ENCODE measurements at regions of chr17 and their contacts with region 1.

Region 1: DNA sequence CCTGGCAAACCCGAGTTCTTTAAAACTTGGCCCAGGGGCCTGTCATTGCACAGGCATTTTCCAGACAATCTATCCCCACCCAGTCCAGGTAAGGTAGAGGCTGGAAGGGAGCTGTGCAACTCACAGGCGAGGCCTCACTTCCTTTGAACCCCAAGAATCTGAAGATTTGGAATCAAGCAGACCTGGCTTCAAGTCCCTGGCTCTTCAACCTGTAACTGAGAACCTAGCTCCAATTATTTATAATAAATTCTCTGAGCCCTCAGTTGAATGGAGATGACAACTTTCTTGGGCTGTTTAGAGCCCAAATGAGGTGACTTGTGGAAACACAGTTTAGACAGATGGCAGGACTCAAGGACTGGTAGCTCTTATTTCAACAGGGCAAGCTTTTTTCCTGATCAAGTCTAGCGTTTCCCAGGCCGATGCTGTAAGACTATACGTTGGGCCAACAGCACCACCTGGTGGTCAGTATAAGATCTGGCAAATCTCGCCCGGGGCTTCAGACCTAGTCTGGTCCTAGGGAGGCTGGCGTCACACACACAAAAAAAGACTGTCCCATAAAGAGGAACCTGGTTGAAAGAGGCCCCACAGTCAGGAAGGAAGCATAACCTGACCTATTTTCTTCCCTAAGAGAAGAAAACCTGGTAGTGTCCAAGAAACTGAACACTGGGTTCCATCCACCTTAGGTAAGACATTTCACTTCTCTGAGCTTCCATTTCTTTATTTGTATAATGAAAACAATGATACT is 117.9 kb downstream of the C17orf67 start:
- DNase-seq: peak; percentile 91
- H3K4me3 Mint-ChIP-seq: no peak overlapping the region
- H3K27ac Mint-ChIP-seq: no peak overlapping the region
- H3K4me1 Mint-ChIP-seq: peaks cover 9% of the 10 kb centered on the region
- H3K27me3 Mint-ChIP-seq: no peaks in the 10 kb centered on the region

Region 2: GRCh38 chr17:56499799-56500388 is 215.9 kb before region 1 on chr17:
- CTCF ChIA-PET with region 1: interaction called, 46 read pairs
- intact Hi-C with region 1: loop called (anchors 1 kb)
- DNase-seq: peak; percentile 64
- H3K4me3 Mint-ChIP-seq: no peak overlapping the region
- H3K27ac Mint-ChIP-seq: no peak overlapping the region
- H3K4me1 Mint-ChIP-seq: no peaks in the 10 kb centered on the region
- H3K27me3 Mint-ChIP-seq: no peaks in the 10 kb centered on the region

Region 3: GRCh38 chr17:56598466-56599148 is 117.2 kb before region 1 on chr17:
- CTCF ChIA-PET with region 1: interaction called, 66 read pairs
- intact Hi-C with region 1: no loop called
- DNase-seq: peak; percentile 13
- H3K4me3 Mint-ChIP-seq: peak overlapping the region; percentile 52
- H3K27ac Mint-ChIP-seq: peak overlapping the region; percentile 85
- H3K4me1 Mint-ChIP-seq: peaks cover 66% of the 10 kb centered on the region
- H3K27me3 Mint-ChIP-seq: no peaks in the 10 kb centered on the region

Region 4: DNA sequence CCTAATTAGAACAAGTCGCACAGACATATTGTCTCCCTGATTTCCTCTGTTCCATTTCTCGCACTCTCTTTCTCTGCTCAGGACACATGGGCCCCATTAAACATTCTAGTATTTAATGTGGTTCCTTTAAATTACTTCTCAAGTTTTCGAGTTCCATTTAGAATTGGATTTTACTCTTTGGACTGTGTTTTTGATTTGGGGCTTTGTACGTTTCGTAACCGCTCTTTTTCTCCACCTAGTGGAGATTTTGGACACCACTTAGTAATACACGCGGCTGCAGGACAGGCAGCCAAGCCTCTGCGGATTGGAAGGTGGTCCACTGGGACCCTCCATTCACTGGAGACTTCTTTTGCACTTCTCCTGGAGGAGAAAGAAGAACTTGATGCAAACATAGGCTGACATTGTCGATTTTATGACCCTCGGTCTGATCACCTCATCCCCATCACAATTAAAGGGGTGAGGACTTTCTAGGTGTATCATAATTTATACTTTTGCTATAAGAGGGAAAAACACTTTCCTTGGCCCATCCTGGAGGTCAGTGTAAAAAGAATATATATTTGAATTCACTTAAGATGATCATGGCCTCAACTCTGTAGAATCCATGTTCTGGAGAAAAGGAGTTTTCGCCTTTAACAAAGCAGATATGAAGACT is 36.5 kb before region 1 on chr17:
- CTCF ChIA-PET with region 1: interaction called, 21 read pairs
- intact Hi-C with region 1: loop called (anchors 1 kb)
- DNase-seq: no peak
- H3K4me3 Mint-ChIP-seq: peak overlapping the region; percentile 69
- H3K27ac Mint-ChIP-seq: no peak overlapping the region
- H3K4me1 Mint-ChIP-seq: peaks cover 19% of the 10 kb centered on the region
- H3K27me3 Mint-ChIP-seq: peaks cover 33% of the 10 kb centered on the region

Region 5: DNA sequence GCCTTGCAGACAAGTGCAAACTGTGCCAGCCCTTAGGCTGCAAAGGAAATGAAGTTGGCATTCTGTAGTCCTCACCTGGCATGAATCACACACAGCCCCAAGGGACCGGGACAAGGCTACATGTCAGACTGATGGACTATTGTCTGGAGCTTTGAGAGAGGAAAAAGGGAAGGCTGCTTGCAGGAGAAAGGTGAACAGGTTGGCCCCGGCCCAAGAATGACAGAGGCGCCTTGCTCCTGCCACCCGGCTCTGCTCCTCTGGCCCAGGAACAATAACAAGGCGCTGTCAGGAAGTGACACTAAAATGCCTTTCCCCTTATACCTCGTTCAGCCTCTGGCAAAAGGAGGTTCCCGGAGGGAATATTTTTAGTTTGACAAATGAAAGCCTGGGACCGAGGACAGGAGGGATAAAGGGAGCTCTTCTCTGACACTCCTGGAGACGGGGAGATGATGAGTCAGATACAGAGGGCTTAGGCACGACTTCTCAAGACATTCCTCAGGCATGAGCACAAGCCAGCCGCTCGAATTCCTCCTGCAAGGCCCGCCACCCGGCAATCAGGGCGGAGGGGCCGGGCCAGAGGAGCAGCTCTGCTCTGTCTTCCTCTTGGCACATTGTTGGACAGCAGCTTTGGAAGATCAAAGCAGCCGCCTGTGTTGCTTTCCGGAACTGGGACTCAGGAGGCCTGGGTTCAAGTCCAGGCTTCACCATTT is 16.4 kb before region 1 on chr17:
- CTCF ChIA-PET with region 1: interaction called, 18 read pairs
- intact Hi-C with region 1: no loop called
- DNase-seq: no peak
- H3K4me3 Mint-ChIP-seq: no peak overlapping the region
- H3K27ac Mint-ChIP-seq: no peak overlapping the region
- H3K4me1 Mint-ChIP-seq: no peaks in the 10 kb centered on the region
- H3K27me3 Mint-ChIP-seq: no peaks in the 10 kb centered on the region

Region 6: DNA sequence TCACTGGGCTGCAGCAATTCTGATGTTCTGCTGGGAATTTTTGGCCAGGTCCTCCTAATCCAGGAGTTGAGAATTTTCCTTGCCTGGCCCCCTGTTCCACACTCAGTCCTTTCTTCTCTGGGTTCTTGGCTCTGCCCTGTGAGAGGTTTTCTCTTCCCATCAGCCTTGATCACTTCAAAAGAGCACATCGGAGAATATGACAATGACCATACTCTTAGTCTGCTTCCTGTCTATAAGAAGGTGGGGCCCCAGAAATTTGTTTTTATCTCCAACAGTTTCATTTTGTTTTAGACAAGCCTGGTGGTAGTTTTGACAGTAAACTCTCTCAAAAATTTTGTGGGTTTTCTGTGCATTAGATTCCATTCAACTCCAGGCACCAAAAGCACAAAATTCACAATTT is 47.2 kb after region 1 on chr17:
- CTCF ChIA-PET with region 1: interaction called, 10 read pairs
- intact Hi-C with region 1: loop called (anchors 5 kb)
- DNase-seq: peak; percentile 37
- H3K4me3 Mint-ChIP-seq: peak overlapping the region; percentile 26
- H3K27ac Mint-ChIP-seq: peak overlapping the region; percentile 75
- H3K4me1 Mint-ChIP-seq: peaks cover 25% of the 10 kb centered on the region
- H3K27me3 Mint-ChIP-seq: no peaks in the 10 kb centered on the region

Region 7: GRCh38 chr17:56786989-56787482 is 71.3 kb after region 1 on chr17:
- CTCF ChIA-PET with region 1: interaction called, 69 read pairs
- intact Hi-C with region 1: no loop called
- DNase-seq: peak; percentile 86
- H3K4me3 Mint-ChIP-seq: peak overlapping the region; percentile 20
- H3K27ac Mint-ChIP-seq: peak overlapping the region; percentile 88
- H3K4me1 Mint-ChIP-seq: peaks cover 33% of the 10 kb centered on the region
- H3K27me3 Mint-ChIP-seq: no peaks in the 10 kb centered on the region

Region 8: DNA sequence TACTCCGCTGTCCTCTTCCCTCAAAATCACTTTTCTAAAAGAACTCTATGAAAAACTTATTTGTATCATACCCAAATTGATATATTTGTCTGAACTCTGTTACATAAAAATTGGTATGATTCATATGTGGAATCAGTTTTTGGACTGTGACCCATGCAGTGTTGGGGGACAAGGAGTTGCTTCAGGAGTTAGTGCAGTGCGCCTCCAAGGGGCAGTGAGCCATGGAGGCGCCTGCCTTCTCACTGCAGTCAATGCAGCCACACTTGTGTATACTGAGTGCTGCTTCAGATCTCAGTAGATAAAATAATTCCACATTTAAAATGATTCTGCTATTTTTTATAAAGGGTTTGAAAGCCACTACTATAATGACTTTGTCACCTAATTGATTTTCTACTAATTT is 150.7 kb after region 1 on chr17:
- CTCF ChIA-PET with region 1: no interaction called
- intact Hi-C with region 1: no loop called
- DNase-seq: peak; percentile 15
- H3K4me3 Mint-ChIP-seq: no peak overlapping the region
- H3K27ac Mint-ChIP-seq: no peak overlapping the region
- H3K4me1 Mint-ChIP-seq: peaks cover 9% of the 10 kb centered on the region
- H3K27me3 Mint-ChIP-seq: no peaks in the 10 kb centered on the region

Measured in activated naive CD4-positive, alpha-beta T cell treated with anti-CD3 and anti-CD28 coated beads for 36 hours (primary cell).